Aorta (tissue), 5 donors: ENCODE measurements at regions of chr2 and their contacts with region 1.

Region 1: GRCh38 chr2:219119422-219120043 is 41.1 kb downstream of the NHEJ1 start:
- DNase-seq: peak; percentile 68 to 85
- ATAC-seq: no peak
- H3K4me3 ChIP-seq: no peak overlapping the region
- H3K27ac ChIP-seq: no peak overlapping the region
- H3K4me1 ChIP-seq: no peaks in the 10 kb centered on the region
- H3K27me3 ChIP-seq: no peaks in the 10 kb centered on the region

Region 2: GRCh38 chr2:219057709-219058540 is 61.6 kb before region 1 on chr2:
- intact Hi-C with region 1: loop called (anchors 5 kb)
- DNase-seq: peak; percentile 81 to 92
- ATAC-seq: peak; percentile 92
- H3K4me3 ChIP-seq: no peak overlapping the region
- H3K27ac ChIP-seq: no peak overlapping the region
- H3K4me1 ChIP-seq: no peaks in the 10 kb centered on the region
- H3K27me3 ChIP-seq: no peaks in the 10 kb centered on the region

Region 3: DNA sequence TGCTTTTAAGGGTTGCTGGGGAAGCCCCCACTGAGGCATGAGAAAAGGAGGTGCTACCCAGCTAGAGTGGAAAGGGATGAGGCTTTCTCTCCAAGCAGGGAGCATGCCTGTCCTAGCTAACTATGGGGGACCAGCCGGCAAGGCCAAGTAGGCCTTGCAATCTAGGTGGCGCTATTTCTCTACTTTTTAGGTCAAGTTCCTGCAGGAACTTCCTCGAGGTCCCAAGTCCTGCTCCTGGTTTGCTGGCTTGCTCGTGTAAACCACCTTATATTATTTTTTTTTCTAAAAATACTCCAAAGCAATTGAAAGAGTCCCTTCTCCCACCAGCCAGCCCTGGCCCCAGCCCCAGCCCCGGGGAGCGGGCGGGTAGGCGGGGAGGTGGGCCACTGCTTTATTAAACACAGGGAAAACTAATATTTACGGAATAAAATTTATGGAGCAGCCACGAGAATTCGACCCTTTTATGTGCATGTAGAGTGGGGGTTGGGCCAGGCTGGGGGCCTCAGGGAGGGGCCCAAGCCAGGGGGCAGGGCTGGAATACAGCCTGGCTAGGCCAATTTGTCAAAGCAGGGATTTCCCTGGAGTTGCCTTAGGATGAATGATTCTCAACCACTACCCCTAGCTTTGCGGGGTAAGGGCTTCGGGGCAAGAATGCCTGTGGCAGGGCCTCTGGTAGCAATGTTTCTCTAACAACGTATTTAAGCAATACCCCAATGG is 46.0 kb before region 1 on chr2:
- intact Hi-C with region 1: loop called in 1 of 2 experiments (anchors 5 kb)
- DNase-seq: no peak
- ATAC-seq: no peak
- H3K4me3 ChIP-seq: no peak overlapping the region
- H3K27ac ChIP-seq: no peak overlapping the region
- H3K4me1 ChIP-seq: no peaks in the 10 kb centered on the region
- H3K27me3 ChIP-seq: no peaks in the 10 kb centered on the region